ENCODE measurements at regions of chrX and their contacts with region 1.

Region 1: GRCh38 chrX:94645727-94646126 is 971.7 kb downstream of the FAM133A start:
- DNase-seq: no peak
- H3K4me3 Mint-ChIP-seq: no peak overlapping the region
- H3K27ac Mint-ChIP-seq: no peak overlapping the region
- H3K4me1 Mint-ChIP-seq: no peaks in the 10 kb centered on the region
- H3K27me3 Mint-ChIP-seq: no peaks in the 10 kb centered on the region

Region 2: GRCh38 chrX:94633237-94633636 is 12.5 kb before region 1 on chrX:
- CTCF ChIA-PET with region 1: no interaction called
- POLR2A ChIA-PET with region 1: interaction called, 16 read pairs
- DNase-seq: no peak
- H3K4me3 Mint-ChIP-seq: no peak overlapping the region
- H3K27ac Mint-ChIP-seq: no peak overlapping the region
- H3K4me1 Mint-ChIP-seq: no peaks in the 10 kb centered on the region
- H3K27me3 Mint-ChIP-seq: no peaks in the 10 kb centered on the region